ENCODE measurements at regions of chr18 and their contacts with region 1.

Region 1: DNA sequence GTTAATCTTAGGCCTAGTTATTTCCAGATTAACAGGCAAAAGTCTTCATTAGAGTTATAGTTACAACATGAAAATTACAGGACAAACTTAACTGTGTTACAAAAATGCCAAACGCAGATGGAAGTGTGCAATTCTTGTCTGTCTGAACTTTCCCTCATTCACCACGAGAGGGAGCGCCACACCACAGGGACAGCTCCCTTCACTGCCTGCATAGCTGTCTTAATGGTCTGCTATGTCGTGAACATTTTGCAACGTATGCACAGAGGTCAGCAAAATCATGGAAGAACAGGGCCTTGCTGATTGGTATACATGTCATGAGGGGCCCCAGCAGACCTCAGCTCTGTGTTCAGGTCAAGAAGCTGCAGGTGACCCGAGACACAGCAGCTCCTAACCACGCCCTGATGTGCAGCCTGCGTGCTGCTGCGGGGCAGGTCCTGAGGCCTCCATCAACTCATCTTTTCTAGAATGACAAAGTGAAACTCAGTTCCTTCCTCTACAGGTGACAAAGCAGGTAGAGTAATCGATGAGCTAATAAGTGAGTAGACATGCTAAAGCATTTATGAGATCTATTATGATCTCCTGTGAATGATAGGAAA is 78.8 kb upstream of the ATP8B1 start:
- DNase-seq: peak; percentile 76
- H3K4me3 ChIP-seq: no peak overlapping the region
- H3K27ac ChIP-seq: no peak overlapping the region
- H3K4me1 ChIP-seq: no peaks in the 10 kb centered on the region
- H3K27me3 ChIP-seq: no peaks in the 10 kb centered on the region
- CTCF ChIP-seq: peak; percentile 75 to 84 (median 81)
- POLR2A ChIP-seq: no peak

Region 2: GRCh38 chr18:57649556-57650500 is 232.1 kb before region 1 on chr18:
- intact Hi-C with region 1: no loop called
- DNase-seq: no peak
- H3K4me3 ChIP-seq: no peak overlapping the region
- H3K27ac ChIP-seq: no peak overlapping the region
- H3K4me1 ChIP-seq: no peaks in the 10 kb centered on the region
- H3K27me3 ChIP-seq: no peaks in the 10 kb centered on the region
- CTCF ChIP-seq: no peak
- POLR2A ChIP-seq: no peak

Region 3: DNA sequence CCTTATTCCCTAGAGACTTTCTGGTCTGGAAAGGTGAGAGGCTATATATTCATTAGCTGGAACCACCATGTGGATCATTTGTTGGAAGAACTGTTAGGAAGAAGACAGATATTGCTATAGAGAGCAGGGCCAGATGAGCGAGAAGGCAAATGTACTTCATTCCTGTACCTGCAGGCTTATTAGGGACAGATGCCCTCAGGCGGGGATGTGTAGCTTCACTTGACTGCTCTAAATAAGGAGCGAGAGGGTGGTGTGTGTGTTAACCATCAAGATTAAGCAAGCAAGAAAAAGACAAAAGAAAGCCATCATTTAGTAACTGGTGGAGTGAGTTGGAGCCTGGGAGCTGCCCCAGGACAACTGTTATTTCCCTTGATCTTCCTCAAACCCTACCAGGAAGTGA is 198.5 kb after region 1 on chr18:
- intact Hi-C with region 1: no loop called
- DNase-seq: no peak
- H3K4me3 ChIP-seq: no peak overlapping the region
- H3K27ac ChIP-seq: no peak overlapping the region
- H3K4me1 ChIP-seq: no peaks in the 10 kb centered on the region
- H3K27me3 ChIP-seq: no peaks in the 10 kb centered on the region
- CTCF ChIP-seq: no peak
- POLR2A ChIP-seq: no peak

Region 4: DNA sequence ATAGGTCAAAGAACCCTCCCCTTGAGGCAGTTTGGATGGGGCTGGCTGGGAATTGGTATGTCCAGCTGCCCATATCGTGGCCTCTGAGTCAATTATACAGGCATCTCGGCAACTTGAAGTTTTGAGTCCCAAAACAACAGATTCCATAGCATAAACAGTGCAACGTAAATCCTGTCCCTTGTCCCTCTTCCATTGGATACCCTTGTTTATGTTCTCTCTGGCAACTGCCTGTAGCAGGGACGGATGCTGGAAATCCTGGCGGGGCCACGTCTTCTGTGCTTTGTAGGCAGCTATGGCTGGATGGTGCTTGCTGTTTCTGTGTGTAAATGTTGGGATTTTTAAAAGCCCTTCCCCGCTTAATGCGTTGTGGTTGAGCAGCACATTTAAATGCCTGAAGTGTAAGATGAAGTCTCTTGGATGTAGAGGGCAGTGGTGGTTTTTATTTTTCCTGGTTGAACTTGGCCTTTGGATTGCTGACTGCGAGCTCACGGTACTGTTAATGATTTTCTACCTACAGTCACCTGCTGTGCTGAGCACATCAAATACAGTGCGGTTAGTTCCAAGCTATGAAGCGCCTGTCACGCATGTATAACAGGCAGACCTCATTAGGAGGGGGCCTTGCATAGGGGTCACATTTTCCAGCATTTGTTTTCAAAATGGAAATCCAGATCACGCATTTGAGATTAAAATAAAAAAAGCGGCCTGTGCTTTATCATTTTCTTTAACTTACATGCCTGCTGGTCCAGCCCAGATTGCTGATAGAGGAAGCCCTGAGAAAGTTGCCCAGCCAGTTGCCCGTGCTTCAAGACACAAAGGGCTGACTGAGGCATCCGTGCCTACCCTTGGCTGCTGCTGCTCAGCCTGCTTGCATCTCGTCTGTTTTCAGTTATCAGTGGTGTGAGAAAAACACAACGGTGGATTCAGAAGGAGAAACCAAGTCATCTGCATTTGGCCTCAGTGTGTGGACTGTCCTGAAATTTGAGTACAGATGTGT is 246.8 kb after region 1 on chr18:
- intact Hi-C with region 1: loop called (anchors 10 kb)
- DNase-seq: no peak
- H3K4me3 ChIP-seq: no peak overlapping the region
- H3K27ac ChIP-seq: no peak overlapping the region
- H3K4me1 ChIP-seq: no peaks in the 10 kb centered on the region
- H3K27me3 ChIP-seq: no peaks in the 10 kb centered on the region
- CTCF ChIP-seq: no peak
- POLR2A ChIP-seq: no peak